Transverse colon (tissue), 4 donors: ENCODE measurements at regions of chr17 and their contacts with region 1.

Region 1: GRCh38 chr17:78082988-78083387 is 45.6 kb downstream of the TMC6 start:
- DNase-seq: no peak
- H3K4me3 ChIP-seq: no peak overlapping the region
- H3K27ac ChIP-seq: no peak overlapping the region
- H3K4me1 ChIP-seq: no peaks in the 10 kb centered on the region
- H3K27me3 ChIP-seq: no peaks in the 10 kb centered on the region
- CTCF ChIP-seq: no peak
- EP300 ChIP-seq: no peak
- POLR2A ChIP-seq: no peak

Region 2: GRCh38 chr17:78442648-78443128 is 359.7 kb after region 1 on chr17:
- in situ Hi-C with region 1: loop called in 1 of 4 experiments (anchors 25 kb)
- intact Hi-C with region 1: no loop called
- DNase-seq: peak; percentile 64
- H3K4me3 ChIP-seq: no peak overlapping the region
- H3K27ac ChIP-seq: no peak overlapping the region
- H3K4me1 ChIP-seq: no peaks in the 10 kb centered on the region
- H3K27me3 ChIP-seq: no peaks in the 10 kb centered on the region
- CTCF ChIP-seq: no peak
- EP300 ChIP-seq: peak; percentile 39
- POLR2A ChIP-seq: no peak